GM12878 (cell line): ENCODE measurements at regions of chr3 and their contacts with region 1.

Region 1: GRCh38 chr3:98540346-98540745 is 8.6 kb downstream of the GPR15 start:
- DNase-seq: peak; percentile 92
- ATAC-seq: peak; percentile 39
- H3K4me3 ChIP-seq: peak overlapping the region; percentile 42; the same call in 1 of the 2 replicates
- H3K27ac ChIP-seq: peak overlapping the region; percentile 51
- H3K4me1 ChIP-seq: peaks cover 32% of the 10 kb centered on the region; the same call in 1 of the 2 replicates
- H3K27me3 ChIP-seq: no peaks in the 10 kb centered on the region
- CTCF ChIP-seq: no peak
- EP300 ChIP-seq: peak; percentile 74 to 92; a peak in 3 of 4 replicates
- POLR2A ChIP-seq: no peak
- RAD21 ChIP-seq: no peak

Region 2: GRCh38 chr3:98522244-98523090 is 17.9 kb before region 1 on chr3 and contains the start of gene CLDND1:
- CTCF ChIA-PET with region 1: interaction called, 6 read pairs
- POLR2A ChIA-PET with region 1: interaction called, 9 read pairs
- RAD21 ChIA-PET with region 1: interaction called, 14 read pairs
- SMC1A ChIA-PET with region 1: interaction called, 33 read pairs
- in situ Hi-C with region 1: no loop called
- intact Hi-C with region 1: no loop called
- DNase-seq: peak; percentile 88
- ATAC-seq: peak; percentile 86
- H3K4me3 ChIP-seq: peak within 1 kb of the TSS; percentile 82
- H3K27ac ChIP-seq: peak within 1 kb of the TSS; percentile 85
- H3K4me1 ChIP-seq: peaks cover 13% of the 10 kb centered on the region; the same call in 1 of the 2 replicates
- H3K27me3 ChIP-seq: no peaks in the 10 kb centered on the region
- CTCF ChIP-seq: no peak
- EP300 ChIP-seq: no peak
- POLR2A ChIP-seq: peak; percentile 94
- RAD21 ChIP-seq: no peak
- polyA plus RNA-seq, gene CLDND1: 150 to 163 TPM

Region 3: DNA sequence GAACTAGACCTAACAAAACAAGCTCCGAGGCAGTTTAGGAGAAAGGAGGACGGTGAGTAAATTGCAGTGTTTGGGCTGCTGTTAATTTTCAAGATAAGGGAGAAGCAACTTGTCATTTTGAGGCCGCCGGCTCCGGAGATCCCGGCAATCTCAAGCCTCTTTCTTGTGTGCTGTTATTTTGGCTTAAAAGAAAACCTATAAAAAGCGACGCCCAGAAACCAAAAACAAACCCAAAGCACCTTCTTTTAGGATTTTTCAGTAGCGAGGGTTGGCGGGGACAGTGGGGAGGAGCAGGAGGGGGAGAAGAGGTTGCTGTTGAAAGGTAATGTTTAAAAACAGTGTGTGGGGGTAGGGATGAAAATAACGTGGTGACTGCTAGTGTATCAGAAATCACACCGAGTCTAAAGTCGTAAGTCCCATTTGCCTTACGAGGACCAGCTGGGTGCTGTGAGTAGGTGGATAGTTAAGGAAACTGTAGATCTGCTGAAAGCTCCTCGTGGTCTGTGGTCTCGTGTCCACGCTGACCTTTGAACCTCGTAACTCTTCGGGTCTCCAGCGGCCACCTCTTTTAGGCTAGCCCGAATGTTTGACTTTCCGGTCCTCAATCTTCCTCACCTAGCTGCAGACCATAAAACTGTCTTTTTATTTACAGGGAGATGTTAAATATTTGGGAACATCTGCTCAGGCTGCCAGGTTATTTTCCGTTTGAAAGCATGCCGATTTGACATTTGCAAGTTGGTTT is 193.4 kb after region 1 on chr3:
- CTCF ChIA-PET with region 1: no interaction called
- POLR2A ChIA-PET with region 1: no interaction called
- RAD21 ChIA-PET with region 1: no interaction called
- SMC1A ChIA-PET with region 1: no interaction called
- in situ Hi-C with region 1: no loop called
- intact Hi-C with region 1: no loop called
- DNase-seq: peak; percentile 33
- ATAC-seq: peak; percentile 39
- H3K4me3 ChIP-seq: peak overlapping the region; percentile 80
- H3K27ac ChIP-seq: peak overlapping the region; percentile 60
- H3K4me1 ChIP-seq: no peaks in the 10 kb centered on the region
- H3K27me3 ChIP-seq: no peaks in the 10 kb centered on the region
- CTCF ChIP-seq: no peak
- EP300 ChIP-seq: no peak; a peak in 1 of 4 replicates
- POLR2A ChIP-seq: 0 out of 2 replicates have a peak, but pooled peaks have one; percentile 6
- RAD21 ChIP-seq: no peak

Region 4: GRCh38 chr3:99410789-99411311 is 870.5 kb after region 1 on chr3:
- CTCF ChIA-PET with region 1: no interaction called
- POLR2A ChIA-PET with region 1: no interaction called
- RAD21 ChIA-PET with region 1: no interaction called
- SMC1A ChIA-PET with region 1: no interaction called
- in situ Hi-C with region 1: no loop called
- intact Hi-C with region 1: no loop called
- DNase-seq: peak; percentile 48
- ATAC-seq: peak; percentile 87
- H3K4me3 ChIP-seq: no peak overlapping the region
- H3K27ac ChIP-seq: no peak overlapping the region; the same call in 1 of the 2 replicates
- H3K4me1 ChIP-seq: no peaks in the 10 kb centered on the region; the same call in 1 of the 2 replicates
- H3K27me3 ChIP-seq: no peaks in the 10 kb centered on the region
- CTCF ChIP-seq: no peak
- EP300 ChIP-seq: no peak
- POLR2A ChIP-seq: no peak
- RAD21 ChIP-seq: 0 out of 2 replicates have a peak, but pooled peaks have one; percentile 6